Heart right ventricle (tissue), 16 donors: ENCODE measurements at regions of chr12 and their contacts with region 1.

Region 1: GRCh38 chr12:642633-643474 is 20.4 kb downstream of the NINJ2 start:
- DNase-seq: peak; percentile 77 to 82
- ATAC-seq: peak; percentile 60 to 82 (median 68)
- H3K4me3 ChIP-seq: peak overlapping the region; percentile 45 to 76 (median 68)
- H3K27ac ChIP-seq: peak overlapping the region; percentile 98 to 100 (median 99)
- H3K4me1 ChIP-seq: peaks cover 23 to 88% (median 60%) of the 10 kb centered on the region in 9 donors
- H3K27me3 ChIP-seq: no peaks in the 10 kb centered on the region
- CTCF ChIP-seq: peak in 8 of 9 donors; percentile 5 to 49 (median 36)

Region 2: DNA sequence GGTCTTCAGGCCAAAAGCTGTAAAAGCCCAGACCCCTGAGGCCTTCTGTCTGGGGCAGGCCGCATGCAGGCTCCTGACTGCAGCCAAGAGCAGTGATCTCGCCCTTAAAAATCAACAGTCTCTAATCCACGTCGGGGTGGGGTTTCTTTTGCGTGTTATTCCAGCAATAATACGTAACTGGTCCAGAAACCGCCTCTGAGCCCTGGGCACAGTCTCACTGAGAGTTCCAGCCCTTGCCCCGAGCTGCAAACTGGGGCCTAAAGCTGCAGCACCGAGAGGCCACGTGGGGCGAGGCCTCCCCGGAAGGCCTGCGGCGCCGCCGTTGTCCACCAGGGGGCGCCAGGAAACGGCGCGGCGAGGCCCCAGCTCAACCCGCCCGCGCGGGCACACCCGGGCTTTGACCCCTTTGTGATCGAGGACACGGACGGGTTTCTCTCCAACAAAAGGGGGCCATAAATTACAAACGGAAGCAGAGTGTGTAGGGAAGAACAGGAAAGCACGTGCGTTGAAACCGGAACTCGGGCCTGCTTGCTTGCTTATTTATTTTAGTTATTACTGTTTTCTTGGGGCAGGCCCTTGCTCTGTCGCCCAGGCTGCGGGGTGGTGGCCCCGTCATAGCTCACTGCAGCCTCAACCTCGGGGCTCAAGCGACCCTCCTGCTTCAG is 66.8 kb before region 1 on chr12:
- intact Hi-C with region 1: loop called (anchors 2 to 10 kb)
- DNase-seq: peak; percentile 68 to 87
- ATAC-seq: peak; percentile 35 to 77 (median 60)
- H3K4me3 ChIP-seq: peak overlapping the region in 5 of 10 donors; percentile 7 to 24 (median 19)
- H3K27ac ChIP-seq: peak overlapping the region; percentile 47 to 87 (median 76)
- H3K4me1 ChIP-seq: peaks cover 34 to 66% (median 56%) of the 10 kb centered on the region in 9 donors
- H3K27me3 ChIP-seq: no peaks in the 10 kb centered on the region
- CTCF ChIP-seq: peak; percentile 99 to 100 (median 100)

Region 3: DNA sequence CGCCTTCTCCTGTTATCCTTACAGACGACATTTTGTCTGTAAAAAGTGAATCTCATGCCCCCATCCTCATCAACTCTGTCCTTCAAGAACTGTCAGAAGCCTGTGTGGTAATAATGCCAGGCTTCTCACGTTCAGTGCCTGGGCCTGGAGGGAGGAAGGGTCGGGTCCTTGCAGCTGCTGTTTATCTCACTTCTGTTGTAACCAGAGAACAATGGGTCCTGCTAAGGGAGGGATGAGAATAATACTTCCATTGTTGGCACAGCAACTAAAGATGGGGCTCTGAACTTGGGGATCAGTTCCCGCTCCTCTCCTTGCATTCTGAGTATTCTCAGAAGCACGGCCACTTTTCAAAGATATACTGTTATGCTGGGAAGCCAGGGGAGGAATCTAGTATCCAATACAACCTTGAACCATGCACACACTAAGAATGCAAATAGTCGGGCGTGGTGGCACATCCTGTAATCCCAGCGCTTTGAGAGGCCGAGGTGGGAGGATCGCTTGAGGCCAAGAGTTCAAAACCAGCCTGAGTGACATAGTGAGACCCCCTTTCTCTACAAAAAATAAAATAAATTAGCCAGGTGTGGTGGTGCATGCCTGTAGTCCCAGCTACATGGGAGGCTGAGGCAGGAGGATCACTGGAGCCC is 59.2 kb after region 1 on chr12:
- intact Hi-C with region 1: loop called in 1 of 10 experiments (anchors 5 kb)
- DNase-seq: no peak
- ATAC-seq: no peak
- H3K4me3 ChIP-seq: no peak overlapping the region
- H3K27ac ChIP-seq: peak overlapping the region in 1 of 10 donors; percentile 16
- H3K4me1 ChIP-seq: peaks cover 0 to 30% (median 10%) of the 10 kb centered on the region in 9 donors
- H3K27me3 ChIP-seq: no peaks in the 10 kb centered on the region
- CTCF ChIP-seq: no peak

Region 4: GRCh38 chr12:751192-751998 is 108.5 kb after region 1 on chr12:
- intact Hi-C with region 1: loop called in 9 of 10 experiments (anchors 1 to 5 kb)
- DNase-seq: peak; percentile 92 to 94
- ATAC-seq: peak; percentile 55 to 86 (median 72)
- H3K4me3 ChIP-seq: peak overlapping the region; percentile 0 to 94 (median 86)
- H3K27ac ChIP-seq: peak overlapping the region; percentile 81 to 99 (median 98)
- H3K4me1 ChIP-seq: peaks cover 0 to 36% (median 27%) of the 10 kb centered on the region in 9 donors
- H3K27me3 ChIP-seq: no peaks in the 10 kb centered on the region
- CTCF ChIP-seq: peak; percentile 67 to 91 (median 79)

Region 5: DNA sequence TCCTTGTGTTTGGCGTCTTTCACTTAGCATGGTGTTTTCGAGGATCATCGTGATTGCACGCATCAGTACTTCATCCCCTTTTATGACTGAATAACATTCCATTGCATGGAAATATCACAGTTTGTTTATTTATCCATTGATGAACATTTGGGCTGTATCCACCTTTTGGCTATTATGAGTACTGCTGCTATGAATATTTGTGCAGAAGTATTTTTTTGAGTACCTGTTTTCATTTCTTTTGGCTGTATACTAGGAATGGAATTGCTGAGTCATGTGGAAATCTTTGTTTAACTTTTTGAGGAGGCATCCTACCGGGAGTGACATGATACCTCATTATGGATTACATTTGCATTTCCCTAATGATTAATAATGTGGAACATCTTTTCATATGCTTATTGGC is 175.9 kb after region 1 on chr12:
- intact Hi-C with region 1: loop called in 4 of 10 experiments (anchors 5 to 10 kb)
- DNase-seq: no peak
- ATAC-seq: no peak
- H3K4me3 ChIP-seq: no peak overlapping the region
- H3K27ac ChIP-seq: peak overlapping the region in 3 of 10 donors; percentile 1 to 30 (median 16)
- H3K4me1 ChIP-seq: peaks cover 0 to 38% (median 21%) of the 10 kb centered on the region in 9 donors
- H3K27me3 ChIP-seq: no peaks in the 10 kb centered on the region
- CTCF ChIP-seq: peak in 1 of 9 donors; percentile 6